Aorta (tissue), 5 donors: ENCODE measurements at regions of chr5 and their contacts with region 1.

Region 1: GRCh38 chr5:88729084-88729828 is 153.7 kb downstream of the MEF2C start:
- DNase-seq: peak in 1 of 2 donors; percentile 55
- ATAC-seq: peak; percentile 83
- H3K4me3 ChIP-seq: no peak overlapping the region
- H3K27ac ChIP-seq: peak overlapping the region in 1 of 2 donors; percentile 14
- H3K4me1 ChIP-seq: peaks cover 3 to 4% of the 10 kb centered on the region in 2 donors
- H3K27me3 ChIP-seq: no peaks in the 10 kb centered on the region

Region 2: GRCh38 chr5:88407341-88407740 is 321.9 kb before region 1 on chr5:
- intact Hi-C with region 1: no loop called
- DNase-seq: no peak
- ATAC-seq: no peak
- H3K4me3 ChIP-seq: no peak overlapping the region
- H3K27ac ChIP-seq: no peak overlapping the region
- H3K4me1 ChIP-seq: no peaks in the 10 kb centered on the region
- H3K27me3 ChIP-seq: no peaks in the 10 kb centered on the region

Region 3: GRCh38 chr5:88785391-88786219 is 56.3 kb after region 1 on chr5:
- intact Hi-C with region 1: loop called (anchors 5 kb)
- DNase-seq: no peak
- ATAC-seq: peak; percentile 93
- H3K4me3 ChIP-seq: peak overlapping the region in 1 of 2 donors; percentile 33
- H3K27ac ChIP-seq: peak overlapping the region; percentile 54 to 96
- H3K4me1 ChIP-seq: peaks cover 0 to 2% of the 10 kb centered on the region in 2 donors
- H3K27me3 ChIP-seq: no peaks in the 10 kb centered on the region

Region 4: GRCh38 chr5:88833371-88834130 is 104.3 kb after region 1 on chr5:
- intact Hi-C with region 1: loop called (anchors 5 kb)
- DNase-seq: peak in 1 of 2 donors; percentile 58
- ATAC-seq: peak; percentile 87
- H3K4me3 ChIP-seq: peak overlapping the region in 1 of 2 donors; percentile 82
- H3K27ac ChIP-seq: peak overlapping the region; percentile 71 to 93
- H3K4me1 ChIP-seq: peaks cover 9% of the 10 kb centered on the region in 2 donors
- H3K27me3 ChIP-seq: no peaks in the 10 kb centered on the region

Region 5: DNA sequence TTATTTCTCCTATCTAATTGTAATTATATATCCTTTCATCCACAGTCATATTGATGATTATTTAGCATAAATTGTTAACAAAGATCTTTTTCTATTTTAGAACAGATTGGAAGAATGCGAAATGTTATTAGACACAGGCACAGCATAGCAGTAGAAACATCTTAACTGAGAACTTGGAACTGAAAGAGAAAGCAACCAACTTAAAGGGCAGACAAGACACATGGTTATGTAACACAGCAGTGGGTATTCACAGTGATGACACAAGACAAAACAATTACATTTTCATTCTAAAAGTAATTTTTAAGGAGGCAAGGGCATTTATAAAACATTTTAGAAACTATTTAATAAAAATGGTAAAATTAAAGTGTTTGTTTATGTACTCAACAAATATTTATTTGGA is 211.5 kb after region 1 on chr5:
- intact Hi-C with region 1: loop called (anchors 5 kb)
- DNase-seq: no peak
- ATAC-seq: no peak
- H3K4me3 ChIP-seq: no peak overlapping the region
- H3K27ac ChIP-seq: no peak overlapping the region
- H3K4me1 ChIP-seq: no peaks in the 10 kb centered on the region
- H3K27me3 ChIP-seq: no peaks in the 10 kb centered on the region

Region 6: DNA sequence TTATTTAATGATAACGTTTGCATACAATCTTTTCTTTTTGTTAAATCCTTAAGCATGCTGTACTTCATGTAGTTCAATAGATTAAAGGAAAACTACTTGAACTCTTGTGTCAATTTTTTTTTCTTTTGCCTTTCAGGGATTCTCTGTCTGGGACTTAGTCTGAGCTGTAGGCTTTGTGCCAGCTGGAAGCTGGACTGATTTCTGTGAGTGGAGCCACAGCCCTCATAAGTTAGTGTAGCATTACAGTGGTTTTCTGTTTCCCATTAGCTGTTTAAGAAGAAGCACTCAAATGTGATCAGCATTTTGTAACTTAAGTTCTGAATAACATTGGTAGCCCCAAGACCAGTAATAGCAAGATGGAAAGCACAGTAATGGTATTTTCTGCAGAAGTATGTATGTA is 484.3 kb after region 1 on chr5:
- intact Hi-C with region 1: loop called in 1 of 2 experiments (anchors 5 kb)
- DNase-seq: peak; percentile 76
- ATAC-seq: no peak
- H3K4me3 ChIP-seq: no peak overlapping the region
- H3K27ac ChIP-seq: no peak overlapping the region
- H3K4me1 ChIP-seq: peaks cover 0 to 2% of the 10 kb centered on the region in 2 donors
- H3K27me3 ChIP-seq: no peaks in the 10 kb centered on the region

Region 7: DNA sequence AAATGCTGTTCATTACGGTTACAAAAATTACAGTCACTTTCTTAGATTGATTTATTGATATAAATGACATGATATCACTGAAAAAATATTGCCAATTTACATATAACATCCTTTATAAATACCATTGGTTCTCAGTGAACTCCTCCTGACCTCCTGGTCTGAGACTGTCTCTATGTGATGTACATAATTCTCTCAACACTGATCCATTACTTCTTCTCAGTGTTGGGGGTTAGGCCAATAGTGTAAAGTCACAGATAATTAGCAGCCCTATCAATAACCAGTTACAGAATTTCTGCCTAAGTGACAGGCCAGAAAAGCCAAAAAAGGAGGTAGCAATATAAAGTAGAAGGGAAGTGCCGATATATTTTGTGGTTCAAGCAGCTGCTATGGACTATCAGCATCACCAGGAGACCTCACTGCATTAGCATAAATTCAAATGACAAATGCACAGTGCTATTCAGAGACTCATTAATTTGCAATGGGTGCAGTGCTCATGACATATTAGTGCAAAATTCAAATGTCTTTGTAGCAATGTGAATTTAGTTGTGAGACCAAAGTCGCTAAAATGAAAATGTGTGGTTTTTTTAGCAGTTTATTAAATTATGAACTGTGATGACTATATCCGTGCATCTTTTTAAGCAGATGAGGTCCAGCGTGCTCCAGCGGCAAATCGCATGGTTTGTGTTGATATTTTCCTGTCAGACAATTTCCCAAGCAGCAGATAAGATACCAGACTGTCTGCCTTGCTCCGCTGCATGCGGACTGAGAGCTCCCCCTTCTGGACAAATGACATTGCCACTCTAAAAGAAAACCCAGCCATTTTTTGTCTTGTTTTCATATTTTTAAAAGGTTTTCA is 1535.7 kb after region 1 on chr5:
- intact Hi-C with region 1: loop called (anchors 5 to 10 kb)
- DNase-seq: peak; percentile 67 to 80
- ATAC-seq: peak; percentile 84
- H3K4me3 ChIP-seq: no peak overlapping the region
- H3K27ac ChIP-seq: no peak overlapping the region
- H3K4me1 ChIP-seq: peaks cover 0 to 2% of the 10 kb centered on the region in 2 donors
- H3K27me3 ChIP-seq: no peaks in the 10 kb centered on the region

Region 8: GRCh38 chr5:90386099-90386710 is 1656.9 kb after region 1 on chr5:
- intact Hi-C with region 1: loop called (anchors 5 to 10 kb)
- DNase-seq: no peak
- ATAC-seq: no peak
- H3K4me3 ChIP-seq: no peak overlapping the region
- H3K27ac ChIP-seq: no peak overlapping the region
- H3K4me1 ChIP-seq: peaks cover 0 to 2% of the 10 kb centered on the region in 2 donors
- H3K27me3 ChIP-seq: no peaks in the 10 kb centered on the region